Lower leg skin (tissue), 4 donors: ENCODE measurements at regions of chr10 and their contacts with region 1.

Region 1: GRCh38 chr10:79069325-79070080 is 737 bp downstream of the ZMIZ1 start:
- DNase-seq: peak in 1 of 2 donors; percentile 92
- H3K4me3 ChIP-seq: peak overlapping the region; percentile 91
- CTCF ChIP-seq: no peak
- POLR2A ChIP-seq: no peak

Region 2: GRCh38 chr10:79047875-79048638 is 21.4 kb before region 1 on chr10:
- intact Hi-C with region 1: no loop called
- DNase-seq: peak in 1 of 2 donors; percentile 87
- H3K4me3 ChIP-seq: no peak overlapping the region
- CTCF ChIP-seq: no peak
- POLR2A ChIP-seq: no peak

Region 3: DNA sequence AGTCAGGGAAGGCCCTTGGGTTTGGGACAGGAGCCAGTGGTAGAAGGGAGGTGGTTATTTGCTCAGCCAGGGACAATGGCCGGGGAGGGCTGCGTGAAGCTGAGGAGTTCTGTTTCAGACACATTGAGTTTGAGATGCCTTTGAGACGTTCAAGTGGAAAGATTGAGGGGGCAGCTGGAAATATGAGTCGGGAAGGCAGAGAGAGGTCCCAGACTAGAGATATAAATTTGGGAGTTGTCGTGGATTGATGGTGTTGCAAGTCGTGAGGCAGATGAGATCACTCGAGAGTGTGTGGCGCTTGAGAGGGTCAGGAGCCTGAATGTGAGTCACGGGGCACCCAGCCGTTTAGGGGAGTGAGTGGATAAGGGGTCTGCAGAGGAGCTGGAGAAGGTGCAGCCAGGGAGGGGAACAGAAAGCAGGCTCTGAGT is 72.6 kb after region 1 on chr10:
- intact Hi-C with region 1: loop called (anchors 5 kb)
- DNase-seq: no peak
- H3K4me3 ChIP-seq: no peak overlapping the region
- CTCF ChIP-seq: no peak
- POLR2A ChIP-seq: no peak

Region 4: GRCh38 chr10:79195091-79195923 is 125.8 kb after region 1 on chr10:
- intact Hi-C with region 1: loop called (anchors 10 kb)
- DNase-seq: peak; percentile 84 to 97
- H3K4me3 ChIP-seq: no peak overlapping the region
- CTCF ChIP-seq: peak in 2 of 3 donors; percentile 32 to 83
- POLR2A ChIP-seq: no peak

Region 5: DNA sequence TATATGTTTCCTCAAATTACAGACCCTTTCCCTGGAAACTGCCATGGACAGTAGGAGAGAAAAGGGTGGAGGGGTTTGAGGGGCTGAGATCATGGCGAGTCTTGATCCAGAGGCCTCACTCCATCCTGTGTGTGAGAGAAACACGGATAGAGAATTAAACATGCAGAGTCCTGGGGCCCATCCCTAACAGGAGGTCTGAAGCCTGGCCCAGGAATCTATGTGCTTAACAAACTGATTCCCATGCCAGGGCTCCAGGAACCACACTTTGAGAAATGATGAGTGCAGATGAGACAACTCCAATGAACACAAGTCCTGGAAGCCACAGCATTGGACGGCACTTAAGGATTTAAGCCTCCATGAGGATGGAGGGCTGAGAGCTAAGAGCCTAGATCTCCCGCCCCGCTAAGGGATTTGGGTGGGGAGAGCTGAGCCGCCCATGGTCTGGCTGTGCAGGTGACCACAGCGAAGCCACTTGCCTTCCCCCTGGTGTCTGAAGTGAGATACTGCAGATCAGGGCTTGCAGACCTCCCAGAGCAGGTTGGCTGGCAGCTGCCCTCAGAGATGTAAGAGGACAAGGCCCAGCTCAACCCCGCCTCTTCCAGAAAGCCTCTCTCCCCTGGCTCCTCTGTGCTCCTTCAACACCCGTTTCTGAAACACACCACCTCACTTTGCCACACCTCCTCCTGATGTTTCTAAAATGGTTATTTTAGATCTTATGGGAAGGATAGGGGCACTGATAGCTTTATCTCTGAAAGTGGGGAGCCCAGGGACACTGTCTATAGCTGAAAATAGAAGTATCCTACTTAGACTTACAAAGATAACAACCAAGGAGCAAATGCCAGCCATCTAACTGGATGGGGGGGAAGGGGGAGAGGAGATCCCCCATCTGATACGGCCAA is 418.0 kb after region 1 on chr10:
- intact Hi-C with region 1: no loop called
- DNase-seq: peak in 1 of 2 donors; percentile 90
- H3K4me3 ChIP-seq: no peak overlapping the region
- CTCF ChIP-seq: no peak
- POLR2A ChIP-seq: no peak